Naive thymus-derived CD4-positive, alpha-beta T cell (primary cell): ENCODE measurements at regions of chr9 and their contacts with region 1.

Region 1: DNA sequence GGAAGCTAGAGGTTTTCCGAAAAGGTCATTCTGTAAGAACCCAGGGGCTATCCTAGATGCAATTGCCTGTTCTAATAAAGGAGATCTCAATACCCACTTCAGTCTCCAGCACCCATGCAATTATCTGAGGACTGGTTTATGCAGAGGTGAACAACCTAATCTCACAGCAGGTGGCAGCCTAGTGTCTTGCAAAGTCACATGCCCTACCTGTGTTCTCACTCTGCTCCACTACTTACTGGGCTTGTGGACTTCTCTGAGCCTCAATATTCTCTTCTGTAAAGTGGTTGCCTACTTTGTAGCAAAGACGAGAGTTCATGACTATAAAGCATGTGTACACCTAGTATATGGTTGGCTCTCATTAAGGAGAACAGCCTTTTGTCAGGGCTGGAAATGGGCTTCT is 21.0 kb upstream of the ALDH1B1 start:
- DNase-seq: peak in 5 of 9 donors; percentile 18 to 41 (median 33)
- ATAC-seq: peak; percentile 57
- H3K4me3 ChIP-seq: no peak overlapping the region
- H3K4me3 Mint-ChIP-seq: no peak overlapping the region
- H3K27ac ChIP-seq: no peak overlapping the region
- H3K27ac Mint-ChIP-seq: no peak overlapping the region
- H3K4me1 ChIP-seq: no peaks in the 10 kb centered on the region
- H3K4me1 Mint-ChIP-seq: no peaks in the 10 kb centered on the region
- H3K27me3 ChIP-seq: no peaks in the 10 kb centered on the region
- H3K27me3 Mint-ChIP-seq: peaks cover 0 to 14% (median 6%) of the 10 kb centered on the region in 5 donors

Region 2: DNA sequence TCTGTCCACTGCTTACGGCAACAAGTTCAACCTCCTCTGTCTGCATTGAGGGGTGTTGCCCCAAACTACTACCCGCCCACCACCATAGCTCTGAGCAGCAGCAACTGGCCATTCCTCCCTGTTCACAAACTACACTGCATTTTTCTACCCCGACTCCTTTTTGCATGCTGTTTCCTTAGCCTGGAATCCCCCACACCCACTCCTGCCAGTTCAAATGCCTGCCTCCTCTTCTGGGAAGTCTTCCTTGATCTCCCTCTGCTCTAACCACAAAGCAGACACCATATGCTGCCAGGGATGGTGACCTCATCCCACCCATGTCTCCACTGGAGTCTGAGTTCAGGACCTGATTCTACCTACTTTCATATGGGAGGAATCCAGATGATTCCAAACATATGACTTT is 34.3 kb after region 1 on chr9:
- CTCF ChIA-PET with region 1: interaction called, 3 read pairs
- POLR2A ChIA-PET with region 1: no interaction called
- intact Hi-C with region 1: loop called (anchors 1 kb)
- DNase-seq: no peak
- ATAC-seq: no peak
- H3K4me3 ChIP-seq: no peak overlapping the region
- H3K4me3 Mint-ChIP-seq: no peak overlapping the region
- H3K27ac ChIP-seq: no peak overlapping the region
- H3K27ac Mint-ChIP-seq: no peak overlapping the region
- H3K4me1 ChIP-seq: no peaks in the 10 kb centered on the region
- H3K4me1 Mint-ChIP-seq: peaks cover 0 to 2% (median 0%) of the 10 kb centered on the region in 7 donors
- H3K27me3 ChIP-seq: no peaks in the 10 kb centered on the region
- H3K27me3 Mint-ChIP-seq: peaks cover 3 to 32% (median 6%) of the 10 kb centered on the region in 5 donors

Region 3: GRCh38 chr9:38432922-38433510 is 61.5 kb after region 1 on chr9:
- CTCF ChIA-PET with region 1: no interaction called
- POLR2A ChIA-PET with region 1: no interaction called
- intact Hi-C with region 1: loop called in 1 of 2 experiments (anchors 1 kb)
- DNase-seq: peak in 5 of 9 donors; percentile 12 to 33 (median 15)
- ATAC-seq: peak; percentile 56
- H3K4me3 ChIP-seq: no peak overlapping the region
- H3K4me3 Mint-ChIP-seq: no peak overlapping the region
- H3K27ac ChIP-seq: no peak overlapping the region
- H3K27ac Mint-ChIP-seq: no peak overlapping the region
- H3K4me1 ChIP-seq: no peaks in the 10 kb centered on the region
- H3K4me1 Mint-ChIP-seq: peaks cover 4 to 32% (median 20%) of the 10 kb centered on the region in 7 donors
- H3K27me3 ChIP-seq: no peaks in the 10 kb centered on the region
- H3K27me3 Mint-ChIP-seq: peaks cover 0 to 7% (median 2%) of the 10 kb centered on the region in 5 donors